Natural killer cell (primary cell): ENCODE measurements at regions of chr5 and their contacts with region 1.

Region 1: GRCh38 chr5:100792781-100793180 is 110.3 kb downstream of the ST8SIA4 start:
- DNase-seq: no peak
- ATAC-seq: no peak
- H3K4me3 ChIP-seq: no peak overlapping the region
- H3K4me3 Mint-ChIP-seq: no peak overlapping the region
- H3K27ac ChIP-seq: no peak overlapping the region
- H3K27ac Mint-ChIP-seq: no peak overlapping the region
- H3K4me1 ChIP-seq: peaks cover 5% of the 10 kb centered on the region
- H3K4me1 Mint-ChIP-seq: peaks cover 12 to 14% of the 10 kb centered on the region in 2 donors
- H3K27me3 ChIP-seq: no peaks in the 10 kb centered on the region
- H3K27me3 Mint-ChIP-seq: peaks cover 5 to 27% of the 10 kb centered on the region in 2 donors
- CTCF ChIP-seq: no peak

Region 2: DNA sequence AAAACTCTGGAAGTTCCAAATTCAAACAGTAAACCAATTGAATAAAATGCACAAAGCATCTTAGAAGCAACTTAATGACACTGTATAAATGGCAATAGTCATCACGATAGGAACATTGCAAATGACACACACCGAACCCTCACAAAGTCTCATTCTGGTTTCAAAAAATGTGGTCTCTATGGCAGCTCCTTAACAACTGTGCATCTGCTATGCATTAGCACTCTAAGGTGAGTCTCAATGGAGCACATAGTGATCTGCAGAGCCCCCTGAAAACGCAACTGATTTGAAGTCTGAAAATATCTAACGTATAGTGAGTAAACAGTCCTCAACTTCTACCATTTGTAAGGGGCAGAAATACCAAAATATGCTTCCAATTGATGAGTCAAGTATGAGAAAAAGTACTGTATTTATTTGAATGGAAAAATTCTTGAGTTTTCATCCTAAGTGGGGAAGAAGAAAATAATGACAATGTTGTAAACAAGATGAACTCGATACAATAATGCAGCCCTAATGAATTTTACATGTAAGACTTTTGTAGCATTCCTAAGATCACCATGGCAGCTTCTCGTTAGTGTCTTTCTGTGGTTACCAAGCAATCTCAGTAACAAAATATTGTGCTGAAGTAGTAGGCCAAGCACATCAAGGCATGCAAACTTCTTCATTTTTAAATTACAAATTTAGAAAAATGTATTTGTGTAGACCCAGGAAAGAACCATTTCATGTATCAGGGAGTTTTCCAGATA is 775.1 kb before region 1 on chr5:
- intact Hi-C with region 1: no loop called
- DNase-seq: no peak
- ATAC-seq: no peak
- H3K4me3 ChIP-seq: no peak overlapping the region
- H3K4me3 Mint-ChIP-seq: no peak overlapping the region
- H3K27ac ChIP-seq: no peak overlapping the region
- H3K27ac Mint-ChIP-seq: no peak overlapping the region
- H3K4me1 ChIP-seq: no peaks in the 10 kb centered on the region
- H3K4me1 Mint-ChIP-seq: no peaks in the 10 kb centered on the region
- H3K27me3 ChIP-seq: no peaks in the 10 kb centered on the region
- H3K27me3 Mint-ChIP-seq: no peaks in the 10 kb centered on the region
- CTCF ChIP-seq: no peak

Region 3: DNA sequence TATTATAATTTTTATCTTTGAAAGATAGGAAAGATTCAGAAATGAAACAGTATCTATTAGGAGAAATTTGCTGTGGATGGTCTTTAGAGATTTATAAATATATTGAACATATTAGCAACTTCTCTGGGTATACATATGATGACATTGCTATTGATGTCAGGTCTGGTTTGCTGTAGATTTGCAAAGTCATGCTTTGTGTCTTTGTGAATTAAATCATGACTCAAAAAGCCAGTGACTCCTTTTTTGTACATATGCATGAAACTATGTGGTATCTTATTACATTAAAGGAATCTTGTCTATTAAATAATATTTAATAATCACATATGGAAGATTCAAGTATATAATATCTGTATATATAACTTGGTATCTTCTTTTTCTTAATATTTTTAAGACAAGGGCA is 31.6 kb before region 1 on chr5:
- intact Hi-C with region 1: loop called (anchors 2 kb)
- DNase-seq: no peak
- ATAC-seq: no peak
- H3K4me3 ChIP-seq: no peak overlapping the region
- H3K4me3 Mint-ChIP-seq: no peak overlapping the region
- H3K27ac ChIP-seq: no peak overlapping the region
- H3K27ac Mint-ChIP-seq: no peak overlapping the region
- H3K4me1 ChIP-seq: no peaks in the 10 kb centered on the region
- H3K4me1 Mint-ChIP-seq: no peaks in the 10 kb centered on the region
- H3K27me3 ChIP-seq: no peaks in the 10 kb centered on the region
- H3K27me3 Mint-ChIP-seq: peaks cover 5 to 6% of the 10 kb centered on the region in 2 donors
- CTCF ChIP-seq: no peak